Upper lobe of right lung (tissue), 1 donor: ENCODE measurements at regions of chr15 and their contacts with region 1.

Region 1: DNA sequence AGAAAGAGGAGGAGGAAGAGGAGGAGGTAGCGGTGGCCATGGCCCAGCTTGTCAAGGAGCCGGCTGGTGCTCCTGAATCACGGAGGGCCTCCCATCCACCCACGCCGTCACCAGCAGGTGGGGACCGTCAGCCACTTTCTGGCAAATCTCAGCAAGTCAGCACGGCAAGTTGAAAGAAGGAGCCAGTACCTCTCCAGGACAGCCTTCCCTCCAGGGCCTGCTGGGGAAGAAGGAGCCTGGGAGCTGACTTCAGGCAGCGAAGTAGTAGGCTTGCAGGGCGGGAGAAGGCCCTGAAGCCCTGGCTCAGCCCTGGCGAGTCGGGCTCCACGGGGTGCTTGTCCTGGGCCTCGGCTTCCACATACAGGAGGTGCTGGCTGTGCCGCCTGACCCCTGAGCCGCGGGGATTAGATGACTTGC is 99.2 kb upstream of the TRPM1 start:
- DNase-seq: peak; percentile 92
- ATAC-seq: peak; percentile 94
- H3K4me3 ChIP-seq: no peak overlapping the region
- H3K27ac ChIP-seq: no peak overlapping the region
- H3K4me1 ChIP-seq: no peaks in the 10 kb centered on the region
- H3K27me3 ChIP-seq: no peaks in the 10 kb centered on the region
- CTCF ChIP-seq: peak; percentile 61

Region 2: GRCh38 chr15:31488426-31489204 is 287.9 kb after region 1 on chr15:
- intact Hi-C with region 1: loop called (anchors 5 kb)
- DNase-seq: peak; percentile 75
- ATAC-seq: peak; percentile 91
- H3K4me3 ChIP-seq: no peak overlapping the region
- H3K27ac ChIP-seq: peak overlapping the region; percentile 55
- H3K4me1 ChIP-seq: peaks cover 20% of the 10 kb centered on the region
- H3K27me3 ChIP-seq: no peaks in the 10 kb centered on the region
- CTCF ChIP-seq: peak; percentile 90